Left ventricle myocardium superior (tissue), 1 donor: ENCODE measurements at regions of chr2 and their contacts with region 1.

Region 1: GRCh38 chr2:217713395-217714286 is 289.2 kb downstream of the TNS1 start:
- DNase-seq: peak; percentile 86
- ATAC-seq: peak; percentile 84

Region 2: GRCh38 chr2:216683846-216684507 is 1029.7 kb before region 1 on chr2:
- intact Hi-C with region 1: loop called (anchors 5 kb)
- DNase-seq: no peak
- ATAC-seq: peak; percentile 74

Region 3: DNA sequence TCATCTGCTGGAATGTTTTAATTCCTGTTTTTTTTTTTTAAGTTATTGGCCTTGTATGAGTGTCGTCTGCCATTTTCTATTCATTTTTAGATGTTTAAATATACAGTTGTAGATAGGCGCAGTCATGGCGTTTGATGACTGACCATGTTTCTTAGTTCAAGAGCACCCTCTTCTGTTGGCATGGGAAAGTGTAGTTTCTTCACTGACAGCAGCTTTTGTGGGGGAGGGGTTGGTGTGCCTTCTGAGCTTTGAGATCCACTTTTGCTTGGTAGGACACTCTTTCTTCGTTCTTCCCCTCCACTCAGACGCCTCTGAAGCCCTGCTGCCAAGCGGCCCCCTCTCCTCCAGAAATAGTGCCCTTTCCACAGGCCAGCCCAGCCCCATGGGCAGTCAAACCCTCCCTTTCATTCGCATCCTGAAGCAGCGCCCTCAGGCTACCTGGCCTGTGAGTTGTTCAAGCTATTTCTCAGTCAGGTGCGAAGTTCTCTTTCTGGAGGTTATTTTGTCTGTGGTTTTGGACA is 202.8 kb before region 1 on chr2:
- intact Hi-C with region 1: loop called (anchors 10 kb)
- DNase-seq: peak; percentile 36
- ATAC-seq: peak; percentile 93